Activated CD4-positive, alpha-beta T cell treated with anti-CD3 and anti-CD28 coated beads, Interleukin-2, amount 10 ng/mL, durations not matched to agents 7 days and 5 days (primary cell): ENCODE measurements at regions of chr16 and their contacts with region 1.

Region 1: GRCh38 chr16:27179500-27180072 is 23.7 kb upstream of the KDM8 start:
- DNase-seq: peak; percentile 92
- H3K4me3 Mint-ChIP-seq: no peak overlapping the region
- H3K27ac Mint-ChIP-seq: peak overlapping the region; percentile 71
- H3K4me1 Mint-ChIP-seq: peaks cover 58% of the 10 kb centered on the region
- H3K27me3 Mint-ChIP-seq: peaks cover 6% of the 10 kb centered on the region

Region 2: DNA sequence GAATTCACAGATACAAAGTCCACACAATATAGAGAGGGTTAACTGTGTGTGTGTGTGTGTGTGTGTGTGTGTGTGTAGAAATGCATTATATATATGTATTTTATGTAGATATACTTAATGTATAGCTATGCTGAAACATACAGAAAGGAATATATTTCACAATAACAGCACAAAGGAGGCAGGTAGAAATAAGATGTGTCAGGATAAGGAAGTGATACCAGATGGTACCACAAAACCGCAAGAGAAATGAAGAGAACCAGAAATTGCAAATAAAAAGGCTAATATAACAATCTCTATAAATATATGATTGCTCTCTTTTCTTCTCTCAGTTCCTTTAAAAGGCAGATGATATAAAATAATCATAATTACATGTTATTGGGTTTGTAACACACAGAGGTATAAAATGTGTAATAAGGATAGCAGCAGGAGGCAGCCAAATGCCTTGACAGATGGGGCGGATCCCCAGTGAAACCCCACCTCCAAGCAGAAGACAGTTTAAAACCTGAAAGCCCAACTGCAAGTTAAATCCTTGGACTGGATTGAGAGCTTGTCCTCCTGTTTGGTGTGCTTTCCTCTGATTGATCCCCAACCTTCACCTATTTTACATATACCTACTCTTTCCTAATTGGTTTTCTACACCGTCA is 478.2 kb before region 1 on chr16:
- CTCF ChIA-PET with region 1: no interaction called
- POLR2A ChIA-PET with region 1: no interaction called
- DNase-seq: no peak
- H3K4me3 Mint-ChIP-seq: no peak overlapping the region
- H3K27ac Mint-ChIP-seq: no peak overlapping the region
- H3K4me1 Mint-ChIP-seq: no peaks in the 10 kb centered on the region
- H3K27me3 Mint-ChIP-seq: peaks cover 3% of the 10 kb centered on the region

Region 3: GRCh38 chr16:27164352-27164751 is 15.2 kb before region 1 on chr16:
- CTCF ChIA-PET with region 1: interaction called, 20 read pairs
- POLR2A ChIA-PET with region 1: no interaction called
- DNase-seq: no peak
- H3K4me3 Mint-ChIP-seq: no peak overlapping the region
- H3K27ac Mint-ChIP-seq: no peak overlapping the region
- H3K4me1 Mint-ChIP-seq: peaks cover 15% of the 10 kb centered on the region
- H3K27me3 Mint-ChIP-seq: no peaks in the 10 kb centered on the region

Region 4: DNA sequence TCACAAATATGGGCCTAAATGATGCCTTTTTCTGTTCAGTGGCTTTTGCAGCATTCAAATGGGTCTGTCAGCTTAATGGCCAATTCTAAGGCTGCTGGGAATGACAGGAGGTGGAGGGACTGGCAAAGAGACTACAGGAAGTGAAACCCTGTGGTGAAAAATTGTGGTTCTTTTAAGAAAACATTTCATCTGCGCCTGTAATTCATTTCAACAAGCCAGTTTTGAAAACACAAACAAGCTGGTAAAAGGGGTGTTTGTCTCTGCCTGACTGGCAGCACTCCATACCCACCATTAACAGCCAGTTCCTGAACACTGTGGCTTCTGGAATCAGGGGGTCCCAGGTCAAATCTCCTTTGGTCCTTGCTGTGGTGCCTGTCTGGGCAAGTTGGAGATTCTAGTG is 20.1 kb after region 1 on chr16:
- CTCF ChIA-PET with region 1: interaction called, 13 read pairs
- POLR2A ChIA-PET with region 1: interaction called, 3 read pairs
- DNase-seq: peak; percentile 67
- H3K4me3 Mint-ChIP-seq: peak overlapping the region; percentile 54
- H3K27ac Mint-ChIP-seq: peak overlapping the region; percentile 98
- H3K4me1 Mint-ChIP-seq: peaks cover 89% of the 10 kb centered on the region
- H3K27me3 Mint-ChIP-seq: no peaks in the 10 kb centered on the region

Region 5: DNA sequence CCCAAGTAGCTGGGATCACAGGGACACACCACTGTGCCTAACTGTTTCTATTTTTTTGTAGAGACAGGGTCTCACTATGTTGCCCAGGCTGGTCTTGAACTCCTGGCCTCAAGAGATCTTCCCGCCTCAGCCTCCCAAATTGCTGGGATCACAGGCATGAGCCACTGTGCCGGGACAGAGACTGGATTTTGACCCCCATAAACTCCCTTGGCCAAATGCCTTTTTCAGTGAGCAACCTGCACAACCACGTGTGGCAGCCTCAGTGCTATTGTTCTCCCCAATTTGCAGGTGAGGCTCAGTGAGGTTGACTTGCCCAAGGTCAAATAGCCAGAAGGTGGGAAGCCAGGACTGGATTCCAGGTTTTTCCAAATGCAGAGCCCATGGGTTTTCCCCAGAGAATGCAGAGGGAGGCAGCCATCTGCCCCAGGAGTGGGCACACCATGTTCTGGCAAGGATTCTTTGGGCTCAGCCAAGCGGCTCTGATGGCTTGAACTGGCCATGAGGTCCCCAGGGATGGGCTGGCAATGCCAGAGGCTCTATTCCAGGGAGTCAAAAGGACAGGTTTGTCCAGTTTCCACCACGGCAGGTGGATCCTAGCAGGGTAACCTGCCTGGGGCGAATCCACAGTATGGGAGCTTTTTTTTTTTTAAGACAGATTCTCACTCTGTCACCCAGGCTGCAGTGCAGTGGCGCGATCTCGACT is 1325.3 kb after region 1 on chr16:
- CTCF ChIA-PET with region 1: no interaction called
- POLR2A ChIA-PET with region 1: no interaction called
- DNase-seq: no peak
- H3K4me3 Mint-ChIP-seq: no peak overlapping the region
- H3K27ac Mint-ChIP-seq: no peak overlapping the region
- H3K4me1 Mint-ChIP-seq: peaks cover 24% of the 10 kb centered on the region
- H3K27me3 Mint-ChIP-seq: no peaks in the 10 kb centered on the region